Right ventricle myocardium inferior (tissue), 1 donor: ENCODE measurements at regions of chr7 and their contacts with region 1.

Region 1: DNA sequence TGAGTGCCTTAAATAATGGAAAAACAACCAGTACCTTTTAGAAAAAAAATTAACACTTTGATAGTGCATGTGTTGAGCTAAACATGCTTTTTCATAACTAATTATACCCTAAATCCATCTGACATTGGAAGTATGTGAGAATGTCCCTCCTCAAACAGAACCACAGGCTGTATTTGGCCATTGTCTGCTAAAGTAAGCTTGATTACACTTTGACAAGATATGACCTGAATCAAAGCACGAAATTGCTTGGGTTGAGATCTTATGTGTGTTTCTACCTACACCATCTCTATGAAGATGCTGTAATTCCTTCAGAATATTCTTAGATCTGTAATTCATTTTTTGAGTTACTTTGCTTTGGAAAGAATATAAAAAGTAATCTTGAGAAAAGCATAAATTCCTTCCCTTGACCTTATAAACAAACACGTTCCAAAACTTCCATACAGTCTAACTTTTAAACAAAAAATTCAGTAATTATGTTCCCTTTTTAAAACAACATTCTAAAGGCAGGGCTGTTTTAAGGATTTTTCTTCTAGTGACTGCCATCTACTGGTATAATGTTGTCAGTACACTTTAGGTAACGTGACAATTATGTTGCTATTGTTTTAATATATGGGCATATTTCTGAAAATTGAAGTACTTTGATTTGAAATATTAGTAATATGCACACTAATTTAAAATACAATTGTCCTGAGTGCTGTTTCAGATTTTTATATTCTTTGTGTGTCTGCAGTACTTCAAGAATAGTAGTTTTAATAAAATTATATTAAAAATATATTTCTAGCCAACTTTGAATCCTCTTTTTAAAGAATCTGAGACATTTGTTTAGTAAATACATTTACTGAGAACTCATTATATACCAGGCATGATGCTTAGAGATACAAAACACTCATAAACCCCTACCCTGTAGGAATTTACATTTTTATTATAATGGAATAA is 20.9 kb downstream of the CD36 start:
- DNase-seq: no peak
- ATAC-seq: no peak

Region 2: GRCh38 chr7:80060218-80060806 is 599.1 kb before region 1 on chr7:
- intact Hi-C with region 1: loop called (anchors 5 kb)
- DNase-seq: no peak
- ATAC-seq: no peak

Region 3: DNA sequence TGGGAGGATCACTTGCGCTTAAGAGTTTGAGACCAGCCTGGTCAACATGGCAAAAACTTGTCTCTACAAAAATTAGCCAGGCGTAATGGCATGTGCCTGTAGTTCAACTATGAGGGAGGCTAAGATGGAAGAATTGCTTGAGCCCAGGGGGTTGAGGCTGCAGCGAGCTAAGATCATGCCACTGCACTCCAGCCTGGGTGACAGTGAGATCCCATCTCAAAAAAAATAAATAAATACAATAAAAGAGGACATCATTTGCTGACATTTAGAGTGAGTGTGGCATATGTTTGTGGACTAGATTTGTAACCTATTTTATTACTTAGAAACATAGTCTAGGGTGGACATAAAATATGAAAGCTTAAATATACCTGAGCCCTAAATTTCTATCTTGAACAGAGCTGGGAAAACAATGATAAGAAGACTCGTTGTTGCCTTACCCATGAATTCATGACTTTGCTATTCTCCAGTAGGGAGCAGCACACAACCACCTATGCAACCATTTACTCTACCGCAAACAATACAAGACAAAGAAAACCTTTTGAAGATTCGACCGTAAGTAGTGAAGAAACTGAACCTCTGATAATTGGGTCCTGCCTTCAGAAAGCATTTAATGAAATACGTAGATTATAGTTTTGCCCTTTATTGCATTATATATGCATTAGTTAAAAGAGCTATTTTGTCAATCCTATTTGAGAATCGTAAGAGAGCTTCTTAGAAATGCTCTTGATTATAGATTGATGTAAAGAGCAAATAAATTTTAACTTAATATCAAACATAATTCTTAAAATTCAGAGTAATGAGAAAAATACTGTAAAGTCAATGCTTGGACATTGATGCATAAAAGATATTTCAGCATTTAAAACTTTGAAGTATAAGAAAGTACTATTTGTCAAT is 231.0 kb before region 1 on chr7:
- intact Hi-C with region 1: loop called (anchors 5 kb)
- DNase-seq: no peak
- ATAC-seq: peak; percentile 81

Region 4: GRCh38 chr7:80517282-80517747 is 142.1 kb before region 1 on chr7:
- intact Hi-C with region 1: loop called (anchors 5 kb)
- DNase-seq: no peak
- ATAC-seq: peak; percentile 33

Region 5: DNA sequence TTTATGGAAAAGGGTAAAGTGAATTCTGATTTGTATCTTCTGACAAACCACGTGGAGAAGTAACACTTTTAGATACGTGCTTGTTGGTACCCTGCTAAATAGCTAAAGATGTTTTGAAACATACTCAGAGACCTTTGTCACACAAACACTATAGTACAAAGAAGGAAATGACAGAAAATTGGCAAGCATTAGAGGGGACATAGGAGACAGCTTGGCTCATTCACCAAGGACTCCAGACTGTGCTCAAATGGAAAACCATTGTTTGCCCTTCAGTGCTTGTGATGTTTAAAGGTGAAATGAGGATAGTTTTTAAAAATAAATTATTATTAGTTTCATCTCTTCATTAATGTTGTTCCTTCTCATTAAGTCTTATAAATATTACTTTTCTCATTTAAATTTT is 55.0 kb before region 1 on chr7:
- intact Hi-C with region 1: loop called (anchors 5 kb)
- DNase-seq: no peak
- ATAC-seq: peak; percentile 88

Region 6: GRCh38 chr7:81393018-81393417 is 733.6 kb after region 1 on chr7:
- intact Hi-C with region 1: no loop called
- DNase-seq: no peak
- ATAC-seq: no peak